ENCODE measurements at regions of chr13 and their contacts with region 1.

Region 1: GRCh38 chr13:108915634-108916512 is 286.5 kb downstream of the MYO16 start:
- DNase-seq: peak; percentile 55
- CTCF ChIP-seq: no peak

Region 2: DNA sequence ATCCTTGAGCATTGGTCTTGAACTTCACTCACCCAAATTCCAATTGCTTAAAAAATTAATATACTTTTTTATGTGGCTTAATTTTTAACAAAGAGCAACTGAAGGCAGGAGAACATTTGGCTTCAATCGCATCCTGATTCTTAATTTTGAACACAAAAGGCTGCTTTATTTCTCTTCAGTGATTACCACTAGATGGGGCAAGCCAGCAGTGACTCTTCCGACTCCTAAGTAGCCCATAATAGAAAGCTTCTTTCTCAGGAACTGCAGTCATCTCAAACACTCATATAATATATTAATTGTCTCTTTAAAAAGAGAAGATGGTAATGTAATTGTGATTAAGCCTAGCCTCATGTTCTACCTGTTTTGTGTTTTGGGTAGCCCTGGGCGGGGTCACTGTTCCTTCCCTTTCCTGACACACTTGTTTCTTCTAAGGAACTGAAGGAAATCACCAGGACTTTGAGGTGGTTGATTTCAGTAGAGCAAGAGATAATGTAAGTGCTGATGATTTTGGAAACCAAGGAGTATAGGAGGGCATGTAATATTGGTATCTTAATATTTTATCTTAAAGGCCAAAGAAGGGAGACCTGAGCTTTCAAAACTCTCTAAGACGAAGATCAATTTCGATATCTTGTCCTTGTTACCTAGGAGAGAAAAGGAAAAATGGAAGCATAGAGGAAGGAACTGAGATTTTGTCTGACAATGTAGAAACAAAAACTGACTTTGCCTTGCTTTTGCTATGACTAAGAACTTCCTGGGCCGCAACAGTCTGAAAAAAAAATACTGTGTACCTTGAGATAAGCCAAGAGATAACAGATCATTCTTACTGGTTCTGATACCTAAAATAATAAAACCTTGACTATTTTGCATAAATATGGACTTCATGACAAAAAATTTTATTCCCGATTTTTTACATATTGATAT is 573.2 kb before region 1 on chr13:
- in situ Hi-C with region 1: loop called (anchors 25 kb)
- DNase-seq: peak; percentile 9
- CTCF ChIP-seq: peak; percentile 50

Measured in GM13977 (cell line).